ENCODE measurements at regions of chr6 and their contacts with region 1.

Region 1: DNA sequence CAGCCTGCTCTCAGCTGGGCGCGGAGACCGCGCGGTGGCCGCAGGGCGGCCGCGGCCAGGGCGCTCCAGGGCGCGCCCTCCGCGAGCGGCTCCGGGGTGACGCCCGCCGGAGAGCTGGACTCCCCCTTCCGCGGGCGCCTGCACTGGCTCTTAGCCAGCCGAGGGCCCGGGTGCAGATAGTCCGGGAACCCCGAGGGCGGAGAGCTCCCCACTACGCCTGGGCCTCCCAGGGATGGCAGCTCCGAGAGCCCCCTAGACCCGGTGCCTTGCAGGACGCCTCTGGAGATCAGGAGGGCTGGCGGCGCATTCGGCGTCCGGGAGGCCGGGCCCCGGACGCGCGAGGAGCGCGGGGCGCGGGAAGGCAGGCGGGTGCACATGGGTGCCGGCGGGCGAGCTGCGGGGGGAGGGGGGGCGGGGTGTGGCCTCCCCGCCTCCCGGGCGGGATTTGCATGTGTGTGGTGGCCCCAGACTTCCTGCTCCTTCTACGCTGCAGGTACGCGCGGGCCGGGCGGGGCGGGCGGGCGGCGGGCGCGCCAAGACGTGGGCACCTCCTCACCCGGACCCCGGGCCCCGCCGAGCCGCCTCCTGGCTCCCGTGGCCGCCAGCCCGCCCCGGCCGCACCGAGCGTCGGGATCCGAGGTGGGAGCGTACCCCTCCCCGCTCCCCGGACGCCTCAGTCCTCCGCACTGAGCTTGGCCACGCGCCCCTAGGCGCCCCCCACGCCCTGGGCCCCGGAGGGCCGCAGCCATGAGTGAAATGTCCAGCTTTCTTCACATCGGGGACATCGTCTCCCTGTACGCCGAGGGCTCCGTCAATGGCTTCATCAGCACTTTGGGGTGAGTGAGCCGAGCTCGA is at the start of gene ITPR3:
- DNase-seq: peak; percentile 86
- H3K4me3 Mint-ChIP-seq: peak within 1 kb of the TSS; percentile 93
- H3K27ac Mint-ChIP-seq: peak within 1 kb of the TSS; percentile 95
- H3K4me1 Mint-ChIP-seq: peaks cover 66% of the 10 kb centered on the region
- H3K27me3 Mint-ChIP-seq: no peaks in the 10 kb centered on the region

Region 2: GRCh38 chr6:33633462-33634158 is 12.5 kb after region 1 on chr6:
- CTCF ChIA-PET with region 1: interaction called, 12 read pairs
- DNase-seq: peak; percentile 77
- H3K4me3 Mint-ChIP-seq: peak overlapping the region; percentile 69
- H3K27ac Mint-ChIP-seq: no peak overlapping the region
- H3K4me1 Mint-ChIP-seq: peaks cover 81% of the 10 kb centered on the region
- H3K27me3 Mint-ChIP-seq: no peaks in the 10 kb centered on the region

Region 3: DNA sequence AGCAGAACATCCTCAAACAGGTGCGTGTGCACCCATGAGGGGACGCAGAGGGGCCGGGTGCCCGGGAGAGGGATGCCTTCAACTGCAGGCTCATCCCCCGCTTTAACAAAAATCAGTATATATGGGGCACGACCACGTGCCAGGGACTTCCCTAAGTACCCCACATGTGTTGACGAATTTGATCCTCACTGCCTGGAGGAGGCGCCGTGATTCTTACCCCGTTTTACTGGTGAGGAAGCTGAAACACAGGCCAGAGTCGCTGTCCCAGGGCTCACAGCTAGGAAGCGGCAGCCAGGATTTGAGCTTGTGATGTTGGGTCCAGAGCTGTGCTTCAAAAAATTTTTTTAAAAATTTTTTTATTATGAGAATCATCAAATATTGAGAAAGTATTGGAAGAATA is 44.9 kb after region 1 on chr6:
- CTCF ChIA-PET with region 1: no interaction called
- DNase-seq: no peak
- H3K4me3 Mint-ChIP-seq: no peak overlapping the region
- H3K27ac Mint-ChIP-seq: no peak overlapping the region
- H3K4me1 Mint-ChIP-seq: peaks cover 23% of the 10 kb centered on the region
- H3K27me3 Mint-ChIP-seq: no peaks in the 10 kb centered on the region